ENCODE measurements at regions of chr1 and their contacts with region 1.

Region 1: DNA sequence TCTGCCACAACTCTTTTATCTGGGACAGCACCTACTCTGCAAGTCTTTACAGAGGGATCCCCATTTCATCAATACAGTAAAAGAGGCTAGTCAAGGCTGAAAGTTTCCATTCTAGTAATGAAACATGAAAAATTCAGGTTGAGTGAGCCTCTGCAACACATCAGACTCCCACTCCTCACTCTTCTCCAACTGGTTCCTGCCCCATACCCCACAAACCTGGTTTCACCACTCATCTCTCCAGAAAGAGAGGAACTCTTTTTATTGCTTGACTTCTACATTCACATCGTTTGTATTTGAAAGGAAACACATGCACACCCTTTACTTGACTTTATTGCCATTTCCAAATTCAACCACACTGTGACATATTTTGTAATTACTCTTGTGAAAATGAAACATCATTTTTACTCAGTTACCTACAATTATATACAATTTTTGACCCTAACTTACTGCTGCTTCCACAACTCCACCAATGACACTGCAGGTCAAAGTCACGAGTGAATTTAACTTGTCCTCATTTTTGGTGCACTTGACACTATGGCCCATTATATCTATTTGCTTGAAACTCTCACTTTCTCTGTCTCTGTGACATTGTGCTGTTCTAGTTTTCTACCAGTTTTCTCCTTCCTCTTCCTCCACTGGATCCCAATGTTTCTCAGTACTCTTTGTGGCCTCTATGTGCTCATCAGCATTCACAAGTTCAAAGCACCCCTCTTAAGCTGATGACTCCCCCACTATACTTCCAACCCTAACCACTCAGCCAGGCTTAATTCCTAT is 8.0 kb downstream of the STX6 start:
- DNase-seq: no peak
- H3K4me3 Mint-ChIP-seq: no peak overlapping the region
- H3K27ac Mint-ChIP-seq: no peak overlapping the region
- H3K4me1 Mint-ChIP-seq: peaks cover 25% of the 10 kb centered on the region
- H3K27me3 Mint-ChIP-seq: no peaks in the 10 kb centered on the region

Region 2: DNA sequence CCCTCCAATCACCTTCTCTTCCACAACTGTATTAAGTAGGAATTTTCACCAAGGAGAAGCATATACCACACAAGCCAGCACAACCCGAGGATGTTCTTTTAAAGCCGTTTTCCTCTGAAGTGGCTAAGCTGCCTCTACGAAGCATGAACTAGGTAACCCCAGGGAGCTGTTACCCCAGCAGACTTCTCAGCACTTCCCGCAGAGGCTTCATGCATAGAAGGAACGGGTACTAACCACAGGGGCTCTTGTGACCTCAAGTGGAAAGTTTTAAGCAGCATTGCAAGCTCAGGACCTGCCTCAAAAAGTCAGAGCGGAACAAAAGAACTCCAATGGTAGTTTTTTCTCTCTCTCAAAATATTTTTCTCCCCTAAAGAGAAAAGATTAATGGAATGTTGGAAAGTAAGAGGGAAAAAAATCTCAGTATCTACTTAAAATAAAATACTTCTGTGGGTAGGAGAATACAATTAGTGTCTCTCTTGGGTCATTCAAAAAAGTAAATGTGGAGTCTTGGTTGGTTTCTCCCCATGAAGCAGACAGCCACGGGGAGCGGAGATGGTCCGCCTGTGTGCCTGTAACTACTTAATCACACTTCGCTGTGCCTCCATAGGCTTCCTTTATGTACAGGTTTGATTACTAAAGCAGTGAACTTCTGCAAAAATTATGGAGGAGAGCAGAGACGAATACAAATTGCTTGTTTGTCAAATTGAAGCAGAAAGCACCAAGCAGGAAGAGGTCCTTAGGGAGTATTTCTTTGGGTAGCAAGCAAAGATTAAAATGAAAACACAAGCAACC is 32.9 kb before region 1 on chr1:
- intact Hi-C with region 1: loop called (anchors 1 kb)
- DNase-seq: peak; percentile 90
- H3K4me3 Mint-ChIP-seq: peak overlapping the region; percentile 58
- H3K27ac Mint-ChIP-seq: peak overlapping the region; percentile 86
- H3K4me1 Mint-ChIP-seq: peaks cover 36% of the 10 kb centered on the region
- H3K27me3 Mint-ChIP-seq: no peaks in the 10 kb centered on the region

Measured in activated CD4-positive, alpha-beta T cell treated with anti-CD3 and anti-CD28 coated beads, Interleukin-2, amount 10 ng/mL, durations not matched to agents 24 days and 14 days (primary cell).